Mammary epithelial cell (primary cell): ENCODE measurements at regions of chr22 and their contacts with region 1.

Region 1: GRCh38 chr22:40044102-40044869 is 49.5 kb downstream of the FAM83F start:
- DNase-seq: peak; percentile 99
- H3K4me3 ChIP-seq: peak overlapping the region; percentile 78 to 97 (median 90)
- H3K27ac ChIP-seq: peak overlapping the region; percentile 80
- H3K4me1 ChIP-seq: peaks cover 44% of the 10 kb centered on the region
- H3K27me3 ChIP-seq: no peaks in the 10 kb centered on the region
- CTCF ChIP-seq: no peak

Region 2: DNA sequence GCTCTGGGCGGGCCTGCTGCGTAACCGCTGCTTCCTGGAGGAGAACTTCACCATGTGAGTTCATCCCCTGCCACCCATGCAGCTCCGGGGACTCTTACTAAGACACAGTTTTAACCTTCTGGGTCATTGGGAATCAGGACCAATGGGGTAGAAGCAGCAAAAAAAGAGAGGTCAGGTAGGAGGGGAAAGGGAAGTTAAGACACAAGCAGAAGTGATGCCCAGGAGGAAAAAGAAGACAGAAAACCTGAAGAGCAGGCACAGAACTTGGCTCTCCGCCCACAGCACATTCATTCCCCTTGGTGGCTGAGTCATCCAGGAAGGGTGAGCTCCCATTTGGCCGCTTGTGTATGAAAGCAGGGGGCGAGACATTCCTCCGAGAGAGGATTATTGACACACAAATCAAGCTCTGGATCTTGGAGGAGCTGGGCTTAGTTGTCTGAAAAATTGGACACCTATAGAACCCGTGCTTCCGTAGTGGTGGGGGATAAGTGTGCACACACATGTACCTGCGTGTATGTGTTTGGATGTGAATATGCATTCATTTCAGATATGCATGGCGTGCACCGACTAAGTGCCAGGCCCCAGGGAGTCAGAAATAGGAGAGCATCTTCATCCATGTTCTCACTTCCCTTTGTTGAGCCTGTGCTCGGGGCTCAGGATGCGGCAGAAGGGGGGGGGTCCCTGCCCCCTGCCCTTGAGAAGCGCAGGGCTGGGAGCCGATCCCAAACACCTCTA is 409.4 kb before region 1 on chr22:
- CTCF ChIA-PET with region 1: no interaction called
- dilution Hi-C with region 1: no loop called
- in situ Hi-C with region 1: no loop called
- intact Hi-C with region 1: loop called (anchors 10 kb)
- DNase-seq: peak; percentile 90
- H3K4me3 ChIP-seq: peak overlapping the region in 1 of 3 experiments; percentile 14
- H3K27ac ChIP-seq: peak overlapping the region; percentile 10
- H3K4me1 ChIP-seq: peaks cover 22% of the 10 kb centered on the region
- H3K27me3 ChIP-seq: no peaks in the 10 kb centered on the region
- CTCF ChIP-seq: no peak

Region 3: GRCh38 chr22:39894554-39895092 is 149.7 kb before region 1 on chr22:
- CTCF ChIA-PET with region 1: no interaction called
- dilution Hi-C with region 1: no loop called
- in situ Hi-C with region 1: no loop called
- intact Hi-C with region 1: loop called (anchors 5 kb)
- DNase-seq: no peak
- H3K4me3 ChIP-seq: no peak overlapping the region
- H3K27ac ChIP-seq: no peak overlapping the region
- H3K4me1 ChIP-seq: no peaks in the 10 kb centered on the region
- H3K27me3 ChIP-seq: no peaks in the 10 kb centered on the region
- CTCF ChIP-seq: no peak

Region 4: DNA sequence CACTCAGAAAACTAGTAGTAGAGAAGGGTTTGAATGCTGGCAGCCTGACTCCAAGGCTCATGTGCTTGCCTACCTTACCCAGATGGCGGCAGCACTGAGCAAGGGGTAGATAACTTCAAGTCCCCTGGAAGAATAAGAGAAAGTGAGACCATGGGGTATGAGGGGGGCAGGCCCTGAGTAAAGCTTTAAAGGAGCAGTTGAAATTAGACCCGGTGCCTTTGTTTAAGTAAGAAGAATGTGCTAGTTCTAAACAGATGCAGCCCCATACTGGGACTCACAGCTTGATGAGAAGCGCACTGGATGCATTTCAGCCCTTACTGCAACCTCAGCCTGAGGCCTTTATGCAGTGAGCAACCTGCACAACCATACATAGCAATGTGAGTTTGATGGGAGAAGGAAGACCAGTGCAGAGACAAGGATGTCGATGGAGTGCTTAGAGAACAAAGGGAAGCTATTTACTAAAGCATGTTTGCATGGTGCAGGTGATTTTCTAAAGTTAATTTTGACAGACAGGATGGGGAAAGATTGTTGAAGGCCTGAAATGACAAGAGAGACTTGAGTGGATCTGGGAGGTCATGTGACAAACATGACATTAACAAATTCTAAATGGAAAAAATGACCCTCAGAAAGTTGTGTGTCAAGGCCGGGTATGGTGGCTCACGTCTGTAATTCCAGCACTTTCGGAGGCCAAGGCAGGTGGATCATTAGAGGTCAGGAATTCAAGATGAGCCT is 111.2 kb before region 1 on chr22:
- CTCF ChIA-PET with region 1: interaction called, 28 read pairs
- dilution Hi-C with region 1: no loop called
- in situ Hi-C with region 1: no loop called
- intact Hi-C with region 1: no loop called
- DNase-seq: no peak
- H3K4me3 ChIP-seq: no peak overlapping the region
- H3K27ac ChIP-seq: no peak overlapping the region
- H3K4me1 ChIP-seq: peaks cover 14% of the 10 kb centered on the region
- H3K27me3 ChIP-seq: no peaks in the 10 kb centered on the region
- CTCF ChIP-seq: peak; percentile 66 to 75

Region 5: DNA sequence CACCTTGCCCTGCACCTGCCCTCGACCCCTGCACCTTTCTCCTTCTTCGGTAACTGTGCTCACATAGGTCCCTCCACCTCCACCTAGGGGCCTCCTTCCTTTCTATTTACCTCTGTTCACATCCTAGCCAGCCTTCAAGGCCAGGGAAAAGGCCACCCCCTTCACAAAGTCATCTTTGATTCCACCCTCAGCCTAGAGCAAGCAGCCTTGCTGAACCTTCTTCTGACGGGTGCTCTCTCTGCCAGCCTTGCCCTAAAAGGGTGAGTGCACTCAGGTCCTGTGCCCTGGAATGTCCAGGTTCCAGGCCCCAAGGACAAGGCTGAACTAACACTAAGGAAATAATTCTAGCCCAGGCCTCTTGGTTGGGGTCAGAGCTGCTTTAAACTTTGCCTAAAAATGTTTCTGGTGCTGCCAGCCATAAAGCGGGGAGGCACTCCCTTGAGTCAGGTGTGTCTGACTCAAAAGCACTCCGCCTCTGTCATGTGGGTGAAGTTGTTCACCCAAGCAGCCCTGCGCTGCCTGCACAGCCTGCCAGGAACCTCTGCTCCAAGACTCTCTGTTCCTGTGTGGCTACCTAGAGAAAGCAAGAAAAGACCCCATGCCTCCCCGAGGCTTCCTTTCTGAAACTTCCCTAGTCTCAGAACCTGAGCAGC is 58.8 kb before region 1 on chr22:
- CTCF ChIA-PET with region 1: no interaction called
- dilution Hi-C with region 1: no loop called
- in situ Hi-C with region 1: no loop called
- intact Hi-C with region 1: no loop called
- DNase-seq: peak; percentile 68
- H3K4me3 ChIP-seq: no peak overlapping the region
- H3K27ac ChIP-seq: no peak overlapping the region
- H3K4me1 ChIP-seq: peaks cover 25% of the 10 kb centered on the region
- H3K27me3 ChIP-seq: no peaks in the 10 kb centered on the region
- CTCF ChIP-seq: no peak

Region 6: DNA sequence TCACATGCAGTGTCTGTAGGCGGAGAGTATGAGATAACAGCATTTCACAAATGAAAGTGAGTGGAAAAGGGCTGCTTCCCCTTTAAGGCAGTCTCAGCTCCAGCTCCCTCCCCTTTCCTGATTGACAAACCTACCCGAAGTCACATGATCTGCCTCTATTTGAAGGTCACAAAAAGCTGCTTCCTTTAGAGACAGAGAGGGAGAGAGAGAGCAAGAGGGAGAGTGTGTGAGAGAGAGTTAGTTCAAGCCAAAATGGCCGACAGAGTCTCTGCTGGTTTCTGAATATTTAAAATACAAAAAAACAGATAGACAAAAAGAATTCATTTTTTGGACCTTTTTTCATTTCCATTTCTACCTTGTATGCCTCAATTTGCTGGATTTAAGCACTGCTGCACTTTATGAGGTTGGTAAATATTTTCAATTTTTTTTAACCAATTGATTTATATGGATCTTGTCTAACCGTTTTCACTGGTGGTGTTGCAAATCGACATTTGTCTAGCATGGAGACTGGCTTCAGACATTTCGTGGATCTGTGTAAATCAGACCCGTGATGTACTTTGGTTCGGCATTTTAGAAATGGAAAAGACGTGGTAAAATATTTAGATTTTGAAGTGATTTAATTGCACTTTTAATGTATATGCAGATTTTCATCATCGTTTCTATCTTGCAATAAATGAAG is 133.6 kb after region 1 on chr22 and contains the start of gene TNRC6B:
- CTCF ChIA-PET with region 1: no interaction called
- dilution Hi-C with region 1: no loop called
- in situ Hi-C with region 1: no loop called
- intact Hi-C with region 1: loop called (anchors 1 kb)
- DNase-seq: peak; percentile 97
- H3K4me3 ChIP-seq: peak within 1 kb of the TSS; percentile 53 to 100 (median 100)
- H3K27ac ChIP-seq: peak within 1 kb of the TSS; percentile 90
- H3K4me1 ChIP-seq: peaks cover 26% of the 10 kb centered on the region
- H3K27me3 ChIP-seq: no peaks in the 10 kb centered on the region
- CTCF ChIP-seq: no peak
- total RNA-seq, gene TNRC6B: 25.2 to 27.3 TPM

Region 7: DNA sequence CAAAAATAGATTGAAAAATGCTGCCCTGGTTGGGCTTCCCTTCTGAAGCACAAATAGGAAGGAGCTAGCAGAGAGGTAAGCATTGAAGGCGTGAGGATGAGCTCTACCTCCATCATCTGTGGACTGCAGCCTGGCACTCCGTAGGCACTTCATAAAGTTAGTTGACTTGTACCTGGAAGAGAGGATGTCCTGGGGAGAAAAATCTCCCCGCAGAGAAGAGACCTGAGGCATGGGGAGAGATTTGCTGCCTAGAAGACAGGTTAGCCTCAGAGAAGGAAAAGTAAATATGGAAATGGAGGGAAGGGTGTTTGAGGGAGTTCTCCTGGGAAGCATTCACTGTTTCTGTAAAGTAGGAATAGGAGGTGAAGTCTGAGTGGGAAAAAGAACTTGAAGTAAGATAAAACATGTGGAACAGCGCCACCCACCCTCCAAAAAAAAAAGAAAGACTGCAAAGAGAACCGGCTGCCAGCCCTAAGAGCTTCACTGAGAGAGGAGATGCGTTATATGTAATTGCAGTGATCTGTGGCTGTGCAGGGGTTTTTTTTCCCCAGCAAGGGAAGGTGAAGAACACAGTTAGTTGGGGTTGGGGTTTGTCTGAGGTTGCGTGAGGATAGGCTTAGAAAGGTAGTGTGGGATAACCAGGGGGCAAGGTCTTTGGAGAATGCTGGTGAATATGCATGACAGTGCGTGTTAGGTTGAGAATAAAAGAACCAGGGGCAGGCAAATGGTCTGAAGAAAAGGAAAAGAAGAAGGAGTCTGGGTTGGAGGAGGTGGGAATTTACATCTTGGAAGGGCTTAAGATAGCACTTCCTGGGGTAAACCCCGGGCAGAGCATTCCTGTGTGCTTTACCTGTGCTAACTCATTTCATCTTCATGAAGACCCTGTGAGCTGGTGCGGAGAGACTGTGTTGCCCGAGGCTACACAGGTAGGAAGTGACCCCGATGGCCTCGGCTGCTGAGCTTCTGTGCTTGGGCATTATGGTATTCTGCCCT is 149.4 kb after region 1 on chr22:
- CTCF ChIA-PET with region 1: no interaction called
- dilution Hi-C with region 1: no loop called
- in situ Hi-C with region 1: no loop called
- intact Hi-C with region 1: loop called (anchors 5 kb)
- DNase-seq: no peak
- H3K4me3 ChIP-seq: no peak overlapping the region
- H3K27ac ChIP-seq: no peak overlapping the region
- H3K4me1 ChIP-seq: peaks cover 35% of the 10 kb centered on the region
- H3K27me3 ChIP-seq: no peaks in the 10 kb centered on the region
- CTCF ChIP-seq: peak; percentile 25 to 52